B cell (primary cell): ENCODE measurements at regions of chr7 and their contacts with region 1.

Region 1: GRCh38 chr7:7816084-7816483 is 97.7 kb upstream of the RPA3 start:
- DNase-seq: peak; percentile 73
- ATAC-seq: peak; percentile 74
- H3K4me3 ChIP-seq: peak overlapping the region in 4 of 5 experiments; percentile 11 to 57 (median 40)
- H3K4me3 Mint-ChIP-seq: peak overlapping the region; percentile 71
- H3K27ac ChIP-seq: peak overlapping the region; percentile 40 to 56
- H3K27ac Mint-ChIP-seq: peak overlapping the region; percentile 82
- H3K4me1 ChIP-seq: peaks cover 61% of the 10 kb centered on the region in 2 donors
- H3K4me1 Mint-ChIP-seq: peaks cover 72% of the 10 kb centered on the region
- H3K27me3 ChIP-seq: no peaks in the 10 kb centered on the region
- H3K27me3 Mint-ChIP-seq: no peaks in the 10 kb centered on the region
- CTCF ChIP-seq: no peak

Region 2: DNA sequence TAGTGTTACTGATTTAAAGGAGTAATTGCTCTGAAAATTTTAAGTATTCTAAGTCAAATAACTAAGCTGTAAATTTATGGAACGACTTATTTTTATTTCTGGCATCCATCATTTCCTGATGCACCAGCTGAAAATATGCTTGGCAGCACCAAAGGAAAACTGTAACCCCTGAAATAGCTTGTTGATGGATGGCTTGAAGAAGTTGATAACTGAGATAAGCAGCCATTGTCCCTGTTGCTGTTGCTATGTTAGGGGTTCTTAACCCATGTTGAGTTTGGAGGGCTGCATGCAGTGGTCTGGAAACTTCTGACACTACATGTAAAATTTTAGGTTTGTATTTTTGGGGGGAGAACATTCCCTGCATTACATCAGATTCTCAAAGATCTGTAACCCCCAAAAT is 128.3 kb before region 1 on chr7:
- CTCF ChIA-PET with region 1: no interaction called
- POLR2A ChIA-PET with region 1: no interaction called
- intact Hi-C with region 1: no loop called
- DNase-seq: no peak
- ATAC-seq: no peak
- H3K4me3 ChIP-seq: no peak overlapping the region
- H3K4me3 Mint-ChIP-seq: peak overlapping the region; percentile 36
- H3K27ac ChIP-seq: no peak overlapping the region
- H3K27ac Mint-ChIP-seq: no peak overlapping the region
- H3K4me1 ChIP-seq: peaks cover 4 to 9% of the 10 kb centered on the region in 2 donors
- H3K4me1 Mint-ChIP-seq: peaks cover 32% of the 10 kb centered on the region
- H3K27me3 ChIP-seq: no peaks in the 10 kb centered on the region
- H3K27me3 Mint-ChIP-seq: no peaks in the 10 kb centered on the region
- CTCF ChIP-seq: no peak

Region 3: GRCh38 chr7:7772397-7772821 is 43.7 kb before region 1 on chr7:
- CTCF ChIA-PET with region 1: no interaction called
- POLR2A ChIA-PET with region 1: no interaction called
- intact Hi-C with region 1: loop called (anchors 2 kb)
- DNase-seq: peak; percentile 59
- ATAC-seq: peak; percentile 67
- H3K4me3 ChIP-seq: peak overlapping the region; percentile 34 to 60 (median 42)
- H3K4me3 Mint-ChIP-seq: peak overlapping the region; percentile 86
- H3K27ac ChIP-seq: peak overlapping the region; percentile 67 to 76
- H3K27ac Mint-ChIP-seq: peak overlapping the region; percentile 90
- H3K4me1 ChIP-seq: peaks cover 25 to 30% of the 10 kb centered on the region in 2 donors
- H3K4me1 Mint-ChIP-seq: peaks cover 33% of the 10 kb centered on the region
- H3K27me3 ChIP-seq: no peaks in the 10 kb centered on the region
- H3K27me3 Mint-ChIP-seq: no peaks in the 10 kb centered on the region
- CTCF ChIP-seq: no peak

Region 4: GRCh38 chr7:7803715-7804178 is 12.3 kb before region 1 on chr7:
- CTCF ChIA-PET with region 1: interaction called, 4 read pairs
- POLR2A ChIA-PET with region 1: interaction called, 3 read pairs
- intact Hi-C with region 1: loop called (anchors 2 kb)
- DNase-seq: no peak
- ATAC-seq: no peak
- H3K4me3 ChIP-seq: no peak overlapping the region
- H3K4me3 Mint-ChIP-seq: no peak overlapping the region
- H3K27ac ChIP-seq: no peak overlapping the region
- H3K27ac Mint-ChIP-seq: no peak overlapping the region
- H3K4me1 ChIP-seq: peaks cover 18 to 19% of the 10 kb centered on the region in 2 donors
- H3K4me1 Mint-ChIP-seq: peaks cover under 1% of the 10 kb centered on the region
- H3K27me3 ChIP-seq: no peaks in the 10 kb centered on the region
- H3K27me3 Mint-ChIP-seq: no peaks in the 10 kb centered on the region
- CTCF ChIP-seq: no peak

Region 5: GRCh38 chr7:7857143-7857583 is 41.1 kb after region 1 on chr7:
- CTCF ChIA-PET with region 1: interaction called, 3 read pairs
- POLR2A ChIA-PET with region 1: no interaction called
- intact Hi-C with region 1: loop called (anchors 5 kb)
- DNase-seq: peak; percentile 71
- ATAC-seq: peak; percentile 88
- H3K4me3 ChIP-seq: peak overlapping the region in 1 of 5 experiments; percentile 28
- H3K4me3 Mint-ChIP-seq: peak overlapping the region; percentile 32
- H3K27ac ChIP-seq: peak overlapping the region; percentile 85 to 87
- H3K27ac Mint-ChIP-seq: peak overlapping the region; percentile 94
- H3K4me1 ChIP-seq: peaks cover 31% of the 10 kb centered on the region in 2 donors
- H3K4me1 Mint-ChIP-seq: peaks cover 32% of the 10 kb centered on the region
- H3K27me3 ChIP-seq: no peaks in the 10 kb centered on the region
- H3K27me3 Mint-ChIP-seq: no peaks in the 10 kb centered on the region
- CTCF ChIP-seq: no peak

Region 6: GRCh38 chr7:7920481-7920880 is 104.4 kb after region 1 on chr7:
- CTCF ChIA-PET with region 1: no interaction called
- POLR2A ChIA-PET with region 1: no interaction called
- intact Hi-C with region 1: loop called (anchors 5 kb)
- DNase-seq: peak; percentile 80
- ATAC-seq: peak; percentile 93
- H3K4me3 ChIP-seq: peak overlapping the region in 2 of 5 experiments; percentile 30 to 48
- H3K4me3 Mint-ChIP-seq: peak overlapping the region; percentile 66
- H3K27ac ChIP-seq: peak overlapping the region; percentile 53 to 60
- H3K27ac Mint-ChIP-seq: peak overlapping the region; percentile 66
- H3K4me1 ChIP-seq: peaks cover 33 to 44% of the 10 kb centered on the region in 2 donors
- H3K4me1 Mint-ChIP-seq: peaks cover 59% of the 10 kb centered on the region
- H3K27me3 ChIP-seq: no peaks in the 10 kb centered on the region
- H3K27me3 Mint-ChIP-seq: no peaks in the 10 kb centered on the region
- CTCF ChIP-seq: no peak